Right ventricle myocardium inferior (tissue), 1 donor: ENCODE measurements at regions of chr9 and their contacts with region 1.

Region 1: DNA sequence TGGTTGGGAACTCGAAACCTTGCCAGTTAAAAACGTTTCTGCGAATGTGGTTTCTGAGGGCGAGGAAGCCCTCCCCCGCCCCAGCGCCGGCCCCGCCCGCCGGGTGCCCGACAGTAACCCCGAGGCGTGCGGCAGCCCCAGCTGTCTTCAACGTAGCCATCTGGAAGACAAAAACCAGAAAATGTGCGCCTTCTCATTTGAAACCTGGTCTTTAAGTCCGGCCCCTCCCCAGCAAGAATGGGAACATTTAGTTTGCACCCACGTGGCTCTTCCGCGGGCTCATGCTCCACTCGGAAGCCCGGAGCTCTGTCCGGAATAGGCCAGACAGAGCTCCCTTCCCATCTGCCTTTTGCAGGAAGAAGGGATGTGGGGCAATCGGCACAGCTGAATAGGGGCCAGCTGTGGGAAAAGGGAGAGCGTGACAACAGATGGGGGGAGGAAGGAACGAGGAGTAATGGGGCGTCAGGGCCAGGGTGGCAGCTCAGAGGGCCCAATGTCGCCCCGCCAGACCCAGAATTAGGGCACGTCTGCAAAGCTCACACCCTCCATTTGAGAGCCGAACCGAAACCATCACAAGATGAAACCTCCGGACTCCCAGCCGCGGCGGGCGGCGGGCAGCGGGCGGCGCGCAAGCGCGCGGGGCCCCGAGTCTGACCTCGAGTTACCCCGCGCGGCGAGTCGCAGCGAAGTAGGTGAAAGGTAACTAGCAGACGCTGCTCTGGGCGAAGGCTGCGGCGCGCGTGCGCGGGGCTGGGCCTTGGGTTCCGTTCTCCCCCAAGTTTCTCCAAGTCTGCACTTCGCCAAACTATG is 63.4 kb upstream of the ABCA1 start:
- DNase-seq: peak; percentile 96
- ATAC-seq: peak; percentile 88

Region 2: GRCh38 chr9:104494808-104495207 is 496.5 kb before region 1 on chr9:
- intact Hi-C with region 1: no loop called
- DNase-seq: no peak
- ATAC-seq: no peak

Region 3: DNA sequence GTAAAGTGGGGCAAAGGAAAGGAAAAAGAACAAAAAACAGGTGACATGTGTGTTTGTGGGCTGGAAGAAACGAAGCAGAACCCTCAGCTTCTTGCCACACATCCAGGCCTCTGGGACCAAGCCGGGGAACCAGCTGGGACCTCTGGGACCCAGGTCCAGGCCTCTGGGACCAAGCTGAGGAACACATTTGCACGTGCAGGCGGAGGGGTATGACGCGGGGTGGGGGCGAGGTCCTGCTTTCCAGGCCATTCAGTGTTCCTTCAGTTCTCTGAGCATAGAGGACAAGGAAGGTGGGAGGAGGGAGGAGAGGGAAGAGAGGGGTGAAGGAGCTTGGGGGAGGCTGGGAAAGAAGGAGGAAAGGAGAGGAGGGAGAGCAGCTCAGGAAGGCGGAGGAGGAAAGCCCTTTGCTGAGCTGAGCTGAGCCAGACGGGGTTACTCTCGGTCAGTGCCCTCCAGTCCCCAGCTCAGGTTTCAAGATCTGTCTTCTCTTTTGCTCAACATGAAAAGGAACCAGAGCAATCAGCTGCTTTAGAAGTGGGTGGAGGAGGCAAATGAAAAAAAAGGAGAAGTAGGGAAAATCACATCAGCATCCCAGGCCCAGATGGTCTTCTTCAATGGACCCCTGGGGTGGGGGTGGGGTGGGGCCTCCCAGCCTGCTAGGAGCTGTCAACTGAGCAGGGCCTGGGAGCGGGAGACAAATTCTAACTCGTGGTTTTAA is 122.5 kb before region 1 on chr9:
- intact Hi-C with region 1: loop called (anchors 5 kb)
- DNase-seq: peak; percentile 78
- ATAC-seq: peak; percentile 90

Region 4: DNA sequence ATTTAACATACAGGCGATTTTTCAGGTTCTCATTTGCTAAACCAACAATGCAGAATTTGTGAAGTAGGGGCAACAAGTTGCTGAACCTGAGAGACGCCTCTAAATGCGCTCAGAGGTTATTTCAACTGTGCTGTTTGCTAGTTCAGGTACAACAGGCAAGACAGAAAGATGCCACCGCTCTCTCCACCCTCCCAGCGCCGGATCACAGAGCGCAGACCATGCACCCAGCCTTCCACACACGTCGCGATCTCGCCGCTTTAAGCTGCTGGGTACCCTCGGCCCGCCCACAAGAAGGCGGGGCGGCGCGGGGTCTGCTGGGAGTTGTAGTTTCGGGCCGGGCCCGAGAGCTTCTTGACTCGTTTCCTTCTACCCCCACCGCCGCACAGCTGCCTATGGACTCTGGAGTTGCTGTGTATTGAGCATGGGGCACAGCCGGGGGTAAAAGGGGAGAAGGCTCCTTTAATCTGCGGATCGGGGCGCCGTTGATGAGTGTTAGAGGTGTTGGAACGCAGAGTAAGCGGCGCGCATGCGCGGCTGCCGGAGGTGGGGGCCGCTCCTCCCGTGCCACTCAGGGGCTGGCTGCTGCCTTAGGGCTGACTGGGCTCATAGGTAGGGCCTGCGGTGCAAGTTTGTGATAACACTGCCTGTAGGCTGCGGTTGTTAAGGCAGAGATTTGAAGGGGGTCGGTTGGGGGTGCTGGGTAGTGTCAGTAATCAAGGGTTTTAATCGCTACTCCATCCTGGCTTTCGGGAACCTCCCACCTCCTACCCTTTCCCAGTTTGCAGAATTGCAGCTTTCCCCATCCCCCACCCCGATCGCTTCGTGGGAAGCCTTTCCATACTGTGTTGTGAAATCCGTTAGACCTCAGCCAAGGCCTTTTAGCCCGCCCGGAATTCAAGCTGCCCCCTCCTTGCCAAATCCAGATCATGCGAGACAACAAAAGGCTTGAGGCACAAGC is 23.0 kb before region 1 on chr9:
- intact Hi-C with region 1: loop called (anchors 1 kb)
- DNase-seq: peak; percentile 96
- ATAC-seq: peak; percentile 94

Region 5: DNA sequence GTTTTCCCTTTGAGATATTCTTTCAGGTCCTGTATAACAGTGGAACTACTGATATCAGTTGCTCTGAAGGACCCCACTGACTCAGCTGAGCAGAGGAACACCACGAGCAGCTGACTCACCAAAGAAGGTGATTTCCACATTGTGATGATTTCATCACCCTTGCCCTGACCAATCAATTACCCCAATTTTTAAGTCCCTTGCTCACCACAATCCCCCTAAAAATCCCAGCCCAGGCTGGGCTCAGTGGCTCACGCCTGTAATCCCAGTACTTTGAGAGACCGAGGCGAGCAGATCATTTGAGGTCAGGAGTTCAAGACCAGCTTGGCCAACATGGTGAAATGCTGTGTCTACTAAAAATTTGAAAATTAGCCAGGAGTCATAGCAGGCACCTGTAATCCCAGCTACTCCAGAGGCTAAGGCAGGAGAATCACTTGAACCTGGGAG is 61.9 kb after region 1 on chr9:
- intact Hi-C with region 1: no loop called
- DNase-seq: no peak
- ATAC-seq: no peak

Region 6: DNA sequence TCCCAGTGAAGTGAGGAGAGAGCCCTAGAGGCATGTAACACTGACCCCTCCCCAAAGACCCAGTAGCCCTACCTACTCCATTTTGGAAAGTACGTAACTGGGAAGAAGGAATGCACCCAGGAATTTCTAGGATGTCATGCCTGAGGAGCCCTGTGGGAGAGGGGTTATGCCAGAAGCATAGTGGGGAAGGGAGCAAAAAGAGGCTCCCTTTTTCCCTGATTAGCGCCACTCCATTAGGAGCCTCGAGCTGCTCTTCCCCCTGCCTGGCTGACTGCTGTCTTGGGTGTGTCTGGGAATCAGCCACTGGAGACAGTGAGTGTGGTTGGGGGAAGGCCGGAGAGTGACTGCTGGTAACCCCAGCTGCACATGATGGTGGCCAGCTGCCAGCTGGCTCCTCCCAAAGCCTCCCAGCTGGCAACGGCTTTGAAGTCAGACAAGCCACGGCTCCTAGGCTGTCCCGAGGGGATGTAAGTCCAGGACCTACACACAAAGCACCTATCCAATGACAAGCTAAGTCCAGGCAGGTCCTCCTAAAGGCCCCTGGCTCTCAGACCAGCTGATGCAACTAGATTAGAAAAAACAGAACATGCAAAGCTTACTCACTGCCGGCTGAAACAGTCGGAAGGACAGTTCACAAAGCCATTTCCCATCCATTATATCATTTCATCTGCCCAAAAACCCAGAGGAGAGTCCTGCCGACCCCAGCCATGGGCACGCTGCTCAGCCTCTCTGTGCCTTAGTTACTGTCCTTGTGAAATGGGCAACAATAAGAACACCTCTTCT is 73.2 kb after region 1 on chr9:
- intact Hi-C with region 1: loop called (anchors 1 kb)
- DNase-seq: peak; percentile 93
- ATAC-seq: peak; percentile 98

Region 7: GRCh38 chr9:105150991-105151685 is 159.8 kb after region 1 on chr9:
- intact Hi-C with region 1: no loop called
- DNase-seq: no peak
- ATAC-seq: no peak

Region 8: DNA sequence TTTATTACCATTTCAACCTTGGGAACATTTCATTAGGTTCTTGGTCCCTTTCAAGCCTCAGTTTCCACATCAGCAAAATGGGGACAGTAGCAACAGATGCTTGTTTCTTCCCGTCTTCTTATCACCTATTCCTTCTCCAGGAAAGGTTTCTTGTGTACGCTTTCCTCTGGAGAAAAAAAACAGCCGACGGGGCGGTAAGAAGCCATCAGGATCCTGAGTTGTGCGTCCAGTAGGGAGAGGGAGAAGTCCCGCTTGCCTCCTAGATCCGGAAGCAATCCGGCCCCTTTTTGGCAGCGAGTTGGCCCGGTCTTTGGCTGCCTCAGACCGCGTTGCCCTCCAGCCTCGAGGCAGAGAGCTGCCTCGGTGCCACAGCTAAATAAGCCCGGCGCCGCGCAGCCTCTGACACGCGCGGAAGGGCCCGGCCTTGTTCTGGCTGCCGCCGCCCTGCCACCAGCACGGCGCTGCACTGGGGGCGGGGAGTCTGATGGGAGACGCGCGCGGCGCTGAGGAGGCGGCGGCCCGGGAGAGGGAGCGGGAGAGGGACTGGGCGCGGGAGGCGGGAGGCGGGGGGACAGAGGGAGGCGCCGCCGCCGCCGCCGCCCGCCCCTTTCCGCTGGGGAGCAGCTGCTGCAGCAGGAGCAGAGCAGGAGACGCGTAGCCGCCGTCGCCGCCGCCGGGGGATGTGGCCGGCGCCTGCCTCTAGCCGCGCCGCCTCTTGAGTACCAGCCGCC is 252.8 kb after region 1 on chr9 and contains the start of gene SLC44A1:
- intact Hi-C with region 1: loop called (anchors 1 kb)
- DNase-seq: peak; percentile 100
- ATAC-seq: peak; percentile 99
- total RNA-seq, gene SLC44A1: 16.8 TPM